Heart right ventricle (tissue), 16 donors: ENCODE measurements at regions of chr1 and their contacts with region 1.

Region 1: DNA sequence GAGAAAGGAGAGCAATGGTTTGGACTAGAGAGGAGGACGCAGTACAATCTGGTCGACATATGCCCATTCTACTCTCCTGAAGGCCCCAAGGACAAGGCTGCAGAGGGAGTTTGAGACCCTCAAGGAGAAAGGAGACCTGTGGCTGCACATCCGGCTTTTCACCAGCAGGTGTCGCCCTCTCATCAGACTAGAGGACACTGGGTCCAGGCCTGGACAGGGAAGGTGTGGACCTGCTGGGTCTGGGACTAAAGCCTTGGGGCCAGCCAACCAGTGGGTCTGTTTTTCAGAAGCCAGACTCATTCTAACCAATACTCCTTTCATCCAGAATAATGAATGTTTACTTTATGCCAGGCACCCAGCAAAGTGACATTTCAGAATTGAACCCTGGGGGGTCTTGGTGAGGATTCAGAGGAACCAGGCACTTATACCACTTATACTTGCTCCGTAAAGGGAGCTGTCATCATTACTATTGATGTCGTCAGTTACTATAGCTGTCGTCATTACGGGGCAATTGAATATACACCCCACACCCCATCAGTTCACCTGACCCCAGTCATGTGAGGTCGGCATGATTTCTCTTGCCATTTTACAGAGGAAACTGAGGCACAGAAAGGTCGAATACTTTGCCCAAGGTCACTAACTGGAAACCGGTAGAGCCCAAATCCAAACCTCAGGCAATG is 5.1 kb downstream of the SRARP start:
- DNase-seq: peak; percentile 80 to 83
- ATAC-seq: peak in 6 of 8 donors; percentile 4 to 31 (median 16)
- H3K4me3 ChIP-seq: no peak overlapping the region
- H3K27ac ChIP-seq: no peak overlapping the region
- H3K4me1 ChIP-seq: peaks cover 0 to 22% (median 18%) of the 10 kb centered on the region in 9 donors
- H3K27me3 ChIP-seq: no peaks in the 10 kb centered on the region
- CTCF ChIP-seq: peak; percentile 92 to 99 (median 98)

Region 2: DNA sequence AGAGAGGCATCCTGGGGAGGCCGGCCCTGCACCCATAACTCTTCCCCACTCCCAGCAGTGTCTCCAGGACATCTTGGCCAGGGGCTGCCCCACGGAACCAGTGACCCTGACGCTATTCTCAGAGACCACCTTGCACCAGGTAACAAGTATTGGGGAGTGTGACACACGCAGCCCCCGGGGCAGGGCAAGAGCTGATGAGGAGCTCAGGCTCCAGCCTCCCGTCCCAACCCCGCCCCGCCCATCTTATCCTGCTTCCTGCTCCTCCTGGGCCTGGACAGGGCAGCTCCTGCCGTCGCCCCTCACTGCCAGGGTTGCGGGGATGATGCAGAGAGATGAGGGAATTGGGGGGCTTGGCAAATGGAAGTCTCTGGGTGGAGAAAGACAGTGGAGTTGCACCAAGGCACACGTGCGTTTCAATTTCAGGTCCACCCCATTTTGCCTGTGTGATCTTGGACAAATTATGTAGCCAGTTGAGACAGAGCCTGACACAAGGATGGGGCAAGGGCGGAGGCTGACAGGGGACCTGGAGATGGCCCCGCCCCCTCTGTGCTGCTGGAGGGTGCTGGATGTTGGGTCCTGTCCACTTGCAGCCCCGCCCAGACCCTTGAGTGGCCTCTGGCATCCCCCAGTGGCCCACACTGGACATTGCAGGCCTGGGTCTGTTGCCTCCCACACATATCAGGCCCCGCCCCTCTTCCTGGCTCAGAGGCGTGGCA is 23.4 kb after region 1 on chr1:
- intact Hi-C with region 1: loop called in 8 of 10 experiments (anchors 1 to 2 kb)
- DNase-seq: peak; percentile 87
- ATAC-seq: peak; percentile 84 to 97 (median 92)
- H3K4me3 ChIP-seq: no peak overlapping the region
- H3K27ac ChIP-seq: no peak overlapping the region
- H3K4me1 ChIP-seq: peaks cover 0 to 11% (median 4%) of the 10 kb centered on the region in 9 donors
- H3K27me3 ChIP-seq: peaks cover 0 to 22% (median 6%) of the 10 kb centered on the region in 7 donors
- CTCF ChIP-seq: peak; percentile 81 to 99 (median 95)

Region 3: DNA sequence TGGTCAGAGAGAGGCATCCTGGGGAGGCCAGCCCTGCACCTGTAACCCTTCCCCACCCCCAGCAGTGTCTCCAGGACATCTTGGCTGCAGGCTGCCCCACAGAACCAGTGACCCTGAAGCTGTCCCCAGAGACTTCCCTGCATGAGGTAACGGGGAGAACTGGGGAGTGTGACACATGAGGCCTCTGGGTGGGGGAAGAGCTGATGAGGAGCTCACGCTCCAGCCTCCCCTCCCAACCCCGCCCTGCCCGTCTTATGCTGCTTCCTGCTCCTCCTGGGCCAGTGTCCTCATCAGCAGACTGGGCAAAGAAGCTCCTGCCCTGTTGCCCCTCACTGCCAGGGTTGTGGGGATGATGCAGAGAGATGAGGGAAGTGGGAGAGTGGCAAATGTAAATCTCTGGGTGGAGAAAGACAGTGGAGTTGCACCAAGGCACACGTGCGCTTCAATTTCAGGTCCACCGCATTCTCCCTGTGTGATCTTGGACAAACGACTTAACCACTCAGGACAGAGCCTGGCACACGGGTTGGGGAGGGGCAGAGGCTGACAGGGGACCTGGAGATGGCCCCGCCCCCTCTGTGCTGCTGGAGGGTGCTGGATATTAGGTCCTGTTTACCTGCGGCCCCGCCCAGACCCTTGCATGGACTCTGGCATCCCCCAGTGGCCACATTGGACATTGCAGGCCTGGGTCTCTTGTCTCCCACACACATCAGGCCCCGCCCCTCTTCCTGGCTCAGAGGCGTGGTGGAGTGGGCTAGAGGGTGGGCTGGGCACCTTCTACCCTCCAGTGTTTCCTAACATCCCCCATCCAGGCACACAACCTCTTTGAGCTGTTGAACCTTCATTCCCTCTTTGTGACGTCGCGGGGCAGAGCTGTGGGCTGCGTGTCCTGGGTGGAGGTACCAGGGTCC is 46.7 kb after region 1 on chr1:
- intact Hi-C with region 1: loop called (anchors 1 to 5 kb)
- DNase-seq: peak; percentile 83
- ATAC-seq: peak; percentile 69 to 89 (median 84)
- H3K4me3 ChIP-seq: no peak overlapping the region
- H3K27ac ChIP-seq: no peak overlapping the region
- H3K4me1 ChIP-seq: peaks cover 0 to 7% (median 0%) of the 10 kb centered on the region in 9 donors
- H3K27me3 ChIP-seq: no peaks in the 10 kb centered on the region
- CTCF ChIP-seq: peak; percentile 74 to 95 (median 90)

Region 4: GRCh38 chr1:16187748-16188401 is 178.7 kb after region 1 on chr1:
- intact Hi-C with region 1: loop called in 2 of 10 experiments (anchors 5 to 10 kb)
- DNase-seq: peak; percentile 69 to 83
- ATAC-seq: peak; percentile 72 to 84 (median 80)
- H3K4me3 ChIP-seq: no peak overlapping the region
- H3K27ac ChIP-seq: no peak overlapping the region
- H3K4me1 ChIP-seq: peaks cover 0 to 38% (median 10%) of the 10 kb centered on the region in 9 donors
- H3K27me3 ChIP-seq: no peaks in the 10 kb centered on the region
- CTCF ChIP-seq: peak; percentile 94 to 99 (median 97)

Region 5: DNA sequence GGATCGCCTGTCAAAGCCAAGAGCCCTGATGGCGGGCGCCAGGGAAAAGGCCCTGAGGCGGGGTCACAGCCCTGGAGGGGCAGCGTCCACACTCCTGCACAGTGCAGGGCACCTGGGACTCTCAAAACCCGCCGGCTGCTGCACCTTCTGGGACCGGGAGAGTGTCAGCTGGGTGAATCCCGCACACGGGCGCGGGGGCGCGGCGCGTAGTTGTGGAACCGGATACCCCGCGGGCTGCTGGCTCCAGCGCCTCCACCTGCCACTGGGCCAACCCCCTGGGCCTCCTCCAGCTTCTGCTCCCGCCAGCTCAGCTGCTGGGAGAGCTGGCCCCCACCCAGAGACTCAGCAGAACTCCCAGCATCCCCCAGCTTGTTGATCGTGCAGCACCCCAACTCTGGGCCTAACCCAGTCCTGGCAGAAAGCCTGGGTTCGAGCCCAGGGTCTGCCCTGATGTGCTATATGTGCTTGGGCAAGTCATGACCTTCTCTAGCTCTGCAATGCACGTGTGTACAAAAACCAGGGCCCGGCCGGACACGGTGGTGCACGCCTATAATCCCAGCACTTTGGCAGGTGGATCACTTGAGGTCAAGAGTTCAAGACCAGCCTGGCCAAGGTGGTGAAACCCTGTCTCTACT is 465.1 kb after region 1 on chr1:
- intact Hi-C with region 1: no loop called
- DNase-seq: no peak
- ATAC-seq: peak in 1 of 8 donors; percentile 35
- H3K4me3 ChIP-seq: no peak overlapping the region
- H3K27ac ChIP-seq: no peak overlapping the region
- H3K4me1 ChIP-seq: no peaks in the 10 kb centered on the region
- H3K27me3 ChIP-seq: no peaks in the 10 kb centered on the region
- CTCF ChIP-seq: no peak